ENCODE measurements at regions of chr7 and their contacts with region 1.

Region 1: DNA sequence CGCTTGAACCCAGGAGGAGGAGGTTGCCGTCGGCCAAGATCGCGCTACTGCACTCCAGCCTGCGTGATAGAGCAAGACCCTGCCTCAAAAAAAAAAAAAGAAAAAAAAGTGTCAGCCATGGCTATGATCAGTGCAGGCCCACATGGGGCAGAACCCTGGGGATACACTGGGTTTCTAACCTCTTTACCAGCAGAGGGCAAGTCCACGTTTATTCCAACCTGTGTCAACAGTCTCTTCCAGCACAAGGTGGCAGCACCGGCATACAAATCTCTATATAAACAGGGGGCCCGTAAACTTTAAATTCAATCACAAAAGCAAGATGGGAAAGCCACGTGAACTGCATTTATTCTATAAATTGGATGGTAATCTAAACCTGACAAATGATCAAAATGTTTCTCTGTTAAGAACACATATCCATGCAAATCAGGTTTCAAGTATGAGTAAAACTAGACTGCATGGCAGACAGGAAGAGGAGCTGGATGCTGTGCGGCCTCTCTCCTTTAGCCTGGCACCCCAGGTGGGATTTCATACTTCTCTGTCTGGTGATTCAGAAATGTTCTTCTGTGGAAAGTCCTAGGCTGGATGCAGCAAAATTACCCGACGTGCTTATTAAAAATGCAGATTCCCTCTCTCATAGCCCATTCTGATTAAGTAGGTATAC is 60.0 kb upstream of the STEAP1B start:
- DNase-seq: peak; percentile 81
- ATAC-seq: peak; percentile 61 to 69

Region 2: GRCh38 chr7:22633954-22634474 is 74.1 kb after region 1 on chr7:
- intact Hi-C with region 1: loop called in 1 of 2 experiments (anchors 10 kb)
- DNase-seq: no peak
- ATAC-seq: peak in 1 of 2 donors; percentile 86

Region 3: DNA sequence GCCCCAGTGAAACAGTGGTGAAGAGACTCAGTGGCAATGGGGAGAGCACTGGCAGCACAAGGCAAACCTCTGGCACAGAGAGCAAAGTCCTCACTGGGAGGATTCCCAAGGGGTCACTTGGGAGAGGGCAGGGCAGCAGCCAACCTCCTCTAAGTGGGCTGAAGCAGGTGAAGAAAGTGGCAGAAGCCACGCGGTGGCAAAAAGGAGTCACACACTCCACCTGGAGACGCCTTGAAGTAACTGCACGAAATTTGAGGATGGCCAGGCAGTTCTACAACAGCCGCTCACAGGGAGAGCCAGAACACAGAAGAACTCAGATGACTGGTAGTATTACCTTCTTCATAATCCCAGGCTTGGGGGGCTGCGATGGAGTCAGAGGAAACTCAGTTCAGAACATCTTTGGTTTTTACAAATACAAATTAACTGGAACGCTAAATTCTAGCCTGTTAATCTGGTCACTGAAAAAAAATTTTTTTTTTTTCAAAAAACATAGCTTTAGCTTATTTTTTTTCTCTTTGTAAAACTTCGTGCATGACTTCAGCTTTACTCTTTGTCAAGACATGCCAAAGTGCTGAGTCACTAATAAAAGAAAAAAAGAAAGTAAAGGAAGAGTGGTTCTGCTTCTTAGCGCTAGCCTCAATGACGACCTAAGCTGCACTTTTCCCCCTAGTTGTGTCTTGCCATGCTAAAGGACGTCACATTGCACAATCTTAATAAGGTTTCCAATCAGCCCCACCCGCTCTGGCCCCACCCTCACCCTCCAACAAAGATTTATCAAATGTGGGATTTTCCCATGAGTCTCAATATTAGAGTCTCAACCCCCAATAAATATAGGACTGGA is 166.6 kb after region 1 on chr7:
- intact Hi-C with region 1: loop called (anchors 2 to 10 kb)
- DNase-seq: peak; percentile 58
- ATAC-seq: peak; percentile 45 to 61

Region 4: DNA sequence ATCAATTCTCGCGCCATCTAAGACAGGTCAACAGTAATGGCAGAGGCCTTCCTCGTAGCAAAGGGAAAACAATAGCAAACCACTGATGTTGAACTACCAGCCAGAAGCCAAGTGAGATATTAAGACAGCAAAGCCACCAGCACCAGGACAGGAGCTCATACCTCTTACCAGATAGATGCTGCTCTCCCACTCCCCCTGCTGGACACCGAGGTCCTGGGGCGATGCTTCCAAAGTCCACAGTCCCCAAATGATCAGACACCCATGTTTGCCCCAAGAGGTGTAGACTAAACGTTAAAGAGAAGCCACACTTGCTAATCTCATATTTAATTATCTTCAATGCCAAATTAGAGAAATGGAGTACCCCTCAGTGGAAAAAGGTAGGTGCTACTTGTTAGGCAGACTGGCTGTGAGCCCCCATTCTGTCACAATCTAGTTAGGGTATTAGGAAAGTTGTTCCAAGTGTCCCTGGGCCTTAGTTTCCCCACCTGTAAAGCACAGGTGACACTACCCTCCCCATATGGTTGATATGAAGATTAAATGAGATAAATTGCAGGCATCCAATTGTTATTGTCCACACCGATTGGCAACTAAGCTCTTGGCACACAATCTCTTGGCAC is 222.8 kb after region 1 on chr7:
- intact Hi-C with region 1: loop called in 1 of 2 experiments (anchors 1 kb)
- DNase-seq: peak; percentile 70
- ATAC-seq: peak; percentile 69 to 70